ENCODE measurements at regions of chr7 and their contacts with region 1.

Region 1: GRCh38 chr7:69837387-69838068 is 239.3 kb downstream of the AUTS2 start:
- DNase-seq: no peak
- ATAC-seq: no peak
- H3K4me3 ChIP-seq: no peak overlapping the region
- H3K4me3 Mint-ChIP-seq: no peak overlapping the region
- H3K27ac ChIP-seq: no peak overlapping the region
- H3K27ac Mint-ChIP-seq: no peak overlapping the region
- H3K4me1 ChIP-seq: no peaks in the 10 kb centered on the region
- H3K4me1 Mint-ChIP-seq: no peaks in the 10 kb centered on the region
- H3K27me3 ChIP-seq: no peaks in the 10 kb centered on the region
- H3K27me3 Mint-ChIP-seq: peaks cover 0 to 6% of the 10 kb centered on the region in 2 donors

Region 2: GRCh38 chr7:69849268-69849667 is 11.7 kb after region 1 on chr7:
- CTCF ChIA-PET with region 1: no interaction called
- POLR2A ChIA-PET with region 1: interaction called in 1 of 2 experiments, 14 read pairs
- DNase-seq: no peak
- ATAC-seq: no peak
- H3K4me3 ChIP-seq: no peak overlapping the region
- H3K4me3 Mint-ChIP-seq: no peak overlapping the region
- H3K27ac ChIP-seq: no peak overlapping the region
- H3K27ac Mint-ChIP-seq: no peak overlapping the region
- H3K4me1 ChIP-seq: no peaks in the 10 kb centered on the region
- H3K4me1 Mint-ChIP-seq: no peaks in the 10 kb centered on the region
- H3K27me3 ChIP-seq: no peaks in the 10 kb centered on the region
- H3K27me3 Mint-ChIP-seq: no peaks in the 10 kb centered on the region